Transverse colon (tissue), 4 donors: ENCODE measurements at regions of chr1 and their contacts with region 1.

Region 1: DNA sequence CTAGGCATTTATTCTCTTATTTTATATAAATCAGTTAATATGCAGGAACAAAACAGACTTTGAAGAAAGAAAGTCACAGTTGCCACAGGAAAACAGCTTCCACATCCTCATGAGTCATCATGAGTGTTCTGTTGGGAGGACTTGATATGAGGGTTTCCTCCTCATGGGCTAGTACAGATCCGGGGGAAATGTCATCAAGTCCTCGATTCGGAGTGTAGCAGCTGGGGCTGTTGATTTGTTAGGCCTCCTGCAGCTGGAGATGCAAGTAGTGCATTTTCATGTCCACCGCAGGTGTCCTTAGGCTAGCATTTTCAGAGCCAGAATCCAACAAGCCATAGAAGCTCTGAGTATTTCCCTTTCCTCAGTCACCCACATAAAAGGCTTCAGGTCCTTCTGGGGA is 36.7 kb downstream of the ADAM30 start:
- DNase-seq: no peak
- H3K4me3 ChIP-seq: no peak overlapping the region
- H3K27ac ChIP-seq: no peak overlapping the region
- H3K4me1 ChIP-seq: peaks cover 0 to 13% (median 5%) of the 10 kb centered on the region in 4 donors
- H3K27me3 ChIP-seq: no peaks in the 10 kb centered on the region
- CTCF ChIP-seq: no peak
- EP300 ChIP-seq: no peak
- POLR2A ChIP-seq: no peak

Region 2: DNA sequence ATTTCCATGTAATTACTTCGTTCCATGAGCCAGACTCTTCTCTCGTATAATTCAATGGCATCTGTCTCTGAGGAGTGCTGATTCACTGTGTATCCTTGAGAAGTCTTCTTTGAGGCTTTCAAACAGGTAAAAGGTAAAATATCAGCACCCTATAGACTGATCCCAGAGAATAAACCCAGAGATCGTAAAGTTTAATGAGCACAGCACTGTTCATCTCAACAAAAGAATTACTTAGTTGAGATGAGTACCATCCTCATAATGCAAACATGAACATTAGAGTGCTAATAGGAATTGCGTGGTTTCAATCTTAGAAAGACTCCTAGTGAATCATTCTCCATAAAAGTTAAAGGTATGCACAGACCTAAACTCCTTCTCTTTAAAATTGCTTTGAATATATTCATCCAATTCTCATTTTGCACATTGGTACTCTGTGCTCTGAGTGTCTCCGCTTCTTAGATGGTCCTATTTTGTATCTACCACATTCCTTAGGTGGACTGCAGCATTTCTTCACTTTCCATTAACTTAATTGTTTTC is 968.7 kb before region 1 on chr1:
- in situ Hi-C with region 1: no loop called
- intact Hi-C with region 1: no loop called
- DNase-seq: no peak
- H3K4me3 ChIP-seq: no peak overlapping the region
- H3K27ac ChIP-seq: no peak overlapping the region
- H3K4me1 ChIP-seq: no peaks in the 10 kb centered on the region
- H3K27me3 ChIP-seq: no peaks in the 10 kb centered on the region
- CTCF ChIP-seq: no peak
- EP300 ChIP-seq: no peak
- POLR2A ChIP-seq: no peak

Region 3: GRCh38 chr1:119808972-119809550 is 50.6 kb before region 1 on chr1:
- in situ Hi-C with region 1: loop called in 1 of 4 experiments (anchors 10 kb)
- intact Hi-C with region 1: no loop called
- DNase-seq: peak; percentile 85
- H3K4me3 ChIP-seq: no peak overlapping the region
- H3K27ac ChIP-seq: no peak overlapping the region
- H3K4me1 ChIP-seq: peaks cover under 1 to 14% (median 4%) of the 10 kb centered on the region in 4 donors
- H3K27me3 ChIP-seq: no peaks in the 10 kb centered on the region
- CTCF ChIP-seq: peak; percentile 80 to 91 (median 85)
- EP300 ChIP-seq: no peak
- POLR2A ChIP-seq: no peak

Region 4: GRCh38 chr1:119827010-119827409 is 32.6 kb before region 1 on chr1:
- in situ Hi-C with region 1: no loop called
- intact Hi-C with region 1: no loop called
- DNase-seq: no peak
- H3K4me3 ChIP-seq: no peak overlapping the region
- H3K27ac ChIP-seq: no peak overlapping the region
- H3K4me1 ChIP-seq: no peaks in the 10 kb centered on the region
- H3K27me3 ChIP-seq: no peaks in the 10 kb centered on the region
- CTCF ChIP-seq: peak in 4 of 5 experiments; percentile 16 to 25 (median 18)
- EP300 ChIP-seq: no peak
- POLR2A ChIP-seq: no peak